ENCODE measurements at regions of chrX and their contacts with region 1.

Region 1: DNA sequence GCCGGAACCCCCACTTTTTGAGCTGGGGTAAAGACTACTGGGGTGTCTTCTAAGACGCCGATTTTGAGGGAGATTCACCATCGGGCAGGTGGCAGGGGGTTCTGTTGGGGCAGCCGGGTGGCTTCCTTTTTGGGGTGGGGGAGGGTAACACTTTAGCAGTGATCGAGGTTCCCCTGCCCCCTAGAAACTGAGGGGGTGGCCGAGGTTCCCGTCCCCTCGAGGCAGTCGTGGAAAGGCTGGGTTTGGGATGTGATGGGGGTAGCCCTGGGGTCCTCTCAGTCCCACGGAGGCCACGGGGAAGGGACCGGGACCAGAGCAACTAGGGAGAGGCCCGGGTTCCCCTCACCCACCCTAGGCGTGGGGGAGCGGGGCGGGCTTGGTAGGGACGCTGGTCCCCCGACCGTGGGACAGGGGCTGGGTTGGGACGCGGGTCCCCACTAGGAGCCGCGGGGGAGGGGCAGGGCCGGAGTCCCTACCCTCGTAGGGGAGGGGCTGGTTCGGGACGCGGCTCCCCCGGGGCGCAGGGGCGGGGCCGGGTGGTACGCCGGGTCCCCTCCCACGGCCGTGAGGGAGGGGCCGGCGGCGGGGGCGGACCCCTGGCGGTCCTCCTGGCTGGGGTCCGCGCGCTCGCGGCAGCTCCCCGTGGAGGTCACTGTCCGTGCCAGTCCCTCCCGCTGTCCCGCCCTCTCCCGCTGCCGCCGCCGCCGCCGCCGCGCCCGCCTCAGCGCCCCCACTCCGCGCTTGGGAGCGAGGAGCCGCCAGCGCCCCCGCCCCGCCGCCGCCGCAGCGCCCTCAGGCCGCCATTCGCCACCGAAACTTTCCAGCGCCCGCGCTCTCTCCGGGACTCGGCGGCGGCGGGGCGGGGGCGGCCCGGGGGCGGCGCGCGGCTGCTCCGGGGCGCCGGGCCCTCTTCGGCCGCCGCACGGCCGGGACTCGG is at the start of gene TBL1X:
- DNase-seq: no peak
- ATAC-seq: peak; percentile 58
- H3K4me3 ChIP-seq: peak within 1 kb of the TSS; percentile 65
- H3K27ac ChIP-seq: peak within 1 kb of the TSS; percentile 15
- H3K4me1 ChIP-seq: peaks cover 14% of the 10 kb centered on the region
- H3K27me3 ChIP-seq: no peaks in the 10 kb centered on the region
- CTCF ChIP-seq: no peak
- EP300 ChIP-seq: no peak
- POLR2A ChIP-seq: 0 out of 2 replicates have a peak, but pooled peaks have one; percentile 38
- RAD21 ChIP-seq: no peak
- polyA plus RNA-seq, gene TBL1X: 4.4 to 4.9 TPM

Region 2: GRCh38 chrX:9341291-9342201 is 123.2 kb before region 1 on chrX:
- CTCF ChIA-PET with region 1: no interaction called
- POLR2A ChIA-PET with region 1: no interaction called
- RAD21 ChIA-PET with region 1: no interaction called
- SMC1A ChIA-PET with region 1: interaction called, 3 read pairs
- in situ Hi-C with region 1: no loop called
- intact Hi-C with region 1: loop called (anchors 1 kb)
- DNase-seq: peak; percentile 53
- ATAC-seq: peak; percentile 92
- H3K4me3 ChIP-seq: no peak overlapping the region
- H3K27ac ChIP-seq: peak overlapping the region; percentile 39
- H3K4me1 ChIP-seq: peaks cover 4% of the 10 kb centered on the region; the same call in 1 of the 2 replicates
- H3K27me3 ChIP-seq: no peaks in the 10 kb centered on the region
- CTCF ChIP-seq: no peak
- EP300 ChIP-seq: peak; percentile 79 to 89
- POLR2A ChIP-seq: no peak
- RAD21 ChIP-seq: no peak

Region 3: DNA sequence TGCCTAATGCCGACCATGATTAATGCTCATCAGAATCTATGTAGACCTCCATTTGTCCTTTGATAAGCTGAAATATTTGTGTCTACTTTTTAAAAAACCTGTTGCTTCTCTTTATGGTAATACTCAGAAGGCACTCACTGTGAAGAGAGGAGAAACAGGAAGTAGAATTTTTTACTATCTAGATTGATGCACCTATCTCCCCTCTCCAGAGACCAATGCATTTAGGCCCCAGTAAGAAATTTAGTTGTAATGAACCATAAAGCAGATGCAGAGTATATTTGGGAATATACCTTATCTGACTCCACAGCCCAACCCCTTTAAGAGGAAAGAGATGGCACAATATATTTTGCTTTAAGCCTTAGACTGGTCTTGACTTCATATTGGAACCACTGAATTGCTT is 11.3 kb after region 1 on chrX:
- CTCF ChIA-PET with region 1: no interaction called
- POLR2A ChIA-PET with region 1: interaction called, 3 read pairs
- RAD21 ChIA-PET with region 1: interaction called, 5 read pairs
- SMC1A ChIA-PET with region 1: interaction called, 17 read pairs
- in situ Hi-C with region 1: no loop called
- intact Hi-C with region 1: no loop called
- DNase-seq: no peak
- ATAC-seq: peak; percentile 80
- H3K4me3 ChIP-seq: no peak overlapping the region
- H3K27ac ChIP-seq: no peak overlapping the region
- H3K4me1 ChIP-seq: no peaks in the 10 kb centered on the region
- H3K27me3 ChIP-seq: no peaks in the 10 kb centered on the region
- CTCF ChIP-seq: no peak
- EP300 ChIP-seq: no peak
- POLR2A ChIP-seq: no peak
- RAD21 ChIP-seq: no peak

Region 4: GRCh38 chrX:9482408-9482807 is 17.7 kb after region 1 on chrX:
- CTCF ChIA-PET with region 1: no interaction called
- POLR2A ChIA-PET with region 1: interaction called, 3 read pairs
- RAD21 ChIA-PET with region 1: interaction called, 9 read pairs
- SMC1A ChIA-PET with region 1: interaction called, 17 read pairs
- in situ Hi-C with region 1: no loop called
- intact Hi-C with region 1: no loop called
- DNase-seq: no peak
- ATAC-seq: peak; percentile 73
- H3K4me3 ChIP-seq: no peak overlapping the region
- H3K27ac ChIP-seq: no peak overlapping the region
- H3K4me1 ChIP-seq: no peaks in the 10 kb centered on the region
- H3K27me3 ChIP-seq: no peaks in the 10 kb centered on the region
- CTCF ChIP-seq: no peak
- EP300 ChIP-seq: no peak
- POLR2A ChIP-seq: no peak
- RAD21 ChIP-seq: no peak

Region 5: GRCh38 chrX:9644335-9644734 is 179.6 kb after region 1 on chrX:
- CTCF ChIA-PET with region 1: no interaction called
- POLR2A ChIA-PET with region 1: no interaction called
- RAD21 ChIA-PET with region 1: interaction called, 4 read pairs
- SMC1A ChIA-PET with region 1: no interaction called
- in situ Hi-C with region 1: no loop called
- intact Hi-C with region 1: loop called (anchors 10 kb)
- DNase-seq: peak; percentile 61
- ATAC-seq: peak; percentile 97
- H3K4me3 ChIP-seq: no peak overlapping the region
- H3K27ac ChIP-seq: no peak overlapping the region
- H3K4me1 ChIP-seq: no peaks in the 10 kb centered on the region
- H3K27me3 ChIP-seq: no peaks in the 10 kb centered on the region
- CTCF ChIP-seq: no peak
- EP300 ChIP-seq: peak; percentile 63 to 79
- POLR2A ChIP-seq: no peak
- RAD21 ChIP-seq: no peak

Region 6: DNA sequence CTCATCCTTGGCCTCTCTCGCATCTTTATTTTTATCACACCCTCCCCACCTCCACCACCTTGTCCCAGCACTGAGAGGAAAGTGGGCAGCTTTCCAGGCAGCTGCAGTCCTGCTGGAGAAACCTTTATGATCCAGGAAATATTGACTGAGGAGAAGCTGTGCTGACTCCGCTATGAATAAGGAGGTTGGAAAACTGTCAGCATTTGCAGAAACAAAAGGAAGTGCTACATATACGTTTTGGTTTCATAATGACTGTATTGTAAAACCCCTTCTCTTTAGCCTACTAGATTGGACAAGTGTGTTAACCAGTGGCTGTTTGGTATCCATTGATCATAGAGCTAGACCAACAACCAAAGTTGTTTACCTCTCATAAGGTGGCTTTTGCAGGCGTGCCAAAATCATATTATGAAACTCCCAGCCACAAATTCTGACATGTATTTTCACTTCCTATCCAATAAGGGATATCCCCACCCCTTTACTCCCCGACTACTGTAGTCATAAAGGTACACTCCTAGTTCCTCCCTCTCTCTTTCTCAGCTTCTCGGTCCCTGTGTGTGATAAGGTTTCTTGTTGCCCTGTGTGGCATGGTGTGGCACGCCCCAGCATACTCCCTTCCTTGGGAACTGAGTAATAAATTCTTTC is 212.5 kb after region 1 on chrX:
- CTCF ChIA-PET with region 1: no interaction called
- POLR2A ChIA-PET with region 1: no interaction called
- RAD21 ChIA-PET with region 1: interaction called, 4 read pairs
- SMC1A ChIA-PET with region 1: interaction called, 4 read pairs
- in situ Hi-C with region 1: no loop called
- intact Hi-C with region 1: loop called (anchors 2 kb)
- DNase-seq: peak; percentile 89
- ATAC-seq: peak; percentile 97
- H3K4me3 ChIP-seq: peak overlapping the region; percentile 11; the same call in 1 of the 2 replicates
- H3K27ac ChIP-seq: peak overlapping the region; percentile 85
- H3K4me1 ChIP-seq: peaks cover 6% of the 10 kb centered on the region
- H3K27me3 ChIP-seq: no peaks in the 10 kb centered on the region
- CTCF ChIP-seq: no peak
- EP300 ChIP-seq: peak; percentile 96 to 98
- POLR2A ChIP-seq: no peak
- RAD21 ChIP-seq: 0 out of 2 replicates have a peak, but pooled peaks have one; percentile 5